ENCODE measurements at regions of chr3 and their contacts with region 1.

Region 1: DNA sequence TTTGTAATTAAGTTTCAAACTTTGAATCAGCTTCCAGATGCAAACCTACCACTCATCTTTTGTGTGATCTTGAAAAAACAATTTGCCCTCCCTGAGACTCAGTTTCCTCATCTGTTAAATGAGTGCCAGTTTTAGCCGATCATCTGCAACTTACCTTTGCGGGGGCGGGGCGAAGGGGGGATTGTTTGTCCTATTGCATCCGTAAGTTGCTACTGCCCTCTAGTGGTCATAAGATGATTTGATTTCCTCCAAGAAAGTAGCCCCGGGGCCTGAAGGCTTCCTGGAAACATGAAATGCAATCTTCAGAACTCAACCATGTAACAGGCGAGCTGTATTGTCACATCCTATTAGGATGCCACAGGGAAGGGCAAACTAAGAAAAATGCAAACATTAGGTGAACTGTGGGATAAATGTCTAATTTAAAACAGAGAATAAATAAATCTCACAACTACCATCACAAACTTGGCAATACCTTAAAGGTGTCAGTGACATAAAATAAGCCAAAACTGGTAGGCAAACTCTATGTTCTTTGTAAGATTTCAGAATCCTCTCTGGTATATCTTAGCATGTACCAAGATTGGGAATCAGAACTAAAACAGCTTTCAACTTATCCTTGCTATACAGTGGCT is 63.5 kb upstream of the CLDN18 start:
- DNase-seq: peak; percentile 60
- ATAC-seq: no peak

Region 2: GRCh38 chr3:137032465-137033120 is 913.9 kb before region 1 on chr3:
- intact Hi-C with region 1: loop called (anchors 5 kb)
- DNase-seq: peak; percentile 87
- ATAC-seq: peak; percentile 86